Mammary epithelial cell (primary cell): ENCODE measurements at regions of chr2 and their contacts with region 1.

Region 1: DNA sequence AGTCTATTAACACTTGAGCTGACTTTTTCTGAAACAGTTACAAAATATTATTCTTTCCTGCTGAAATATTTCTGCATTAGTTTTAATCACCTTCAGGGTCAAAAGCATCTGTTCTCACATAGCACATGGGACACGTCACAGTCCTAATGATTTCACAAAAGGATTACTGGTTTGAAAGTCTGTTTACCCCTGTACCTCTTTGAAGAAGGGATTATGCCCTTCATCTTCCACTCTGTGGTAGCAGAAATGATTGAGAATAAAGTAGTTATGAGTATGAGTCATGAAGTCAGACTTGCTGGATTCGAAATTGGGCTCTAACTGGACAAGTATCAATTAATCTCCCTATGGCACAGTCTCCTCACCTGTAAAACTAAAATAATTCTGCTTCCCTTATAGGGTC is 121.2 kb downstream of the SATB2 start:
- DNase-seq: no peak
- H3K4me3 ChIP-seq: no peak overlapping the region
- H3K27ac ChIP-seq: no peak overlapping the region
- H3K4me1 ChIP-seq: no peaks in the 10 kb centered on the region
- H3K27me3 ChIP-seq: no peaks in the 10 kb centered on the region
- CTCF ChIP-seq: no peak

Region 2: GRCh38 chr2:199303728-199304177 is 32.8 kb before region 1 on chr2:
- CTCF ChIA-PET with region 1: no interaction called
- dilution Hi-C with region 1: no loop called
- in situ Hi-C with region 1: no loop called
- intact Hi-C with region 1: loop called (anchors 1 kb)
- DNase-seq: peak; percentile 90
- H3K4me3 ChIP-seq: no peak overlapping the region
- H3K27ac ChIP-seq: peak overlapping the region; percentile 5
- H3K4me1 ChIP-seq: peaks cover 13% of the 10 kb centered on the region
- H3K27me3 ChIP-seq: no peaks in the 10 kb centered on the region
- CTCF ChIP-seq: no peak

Region 3: DNA sequence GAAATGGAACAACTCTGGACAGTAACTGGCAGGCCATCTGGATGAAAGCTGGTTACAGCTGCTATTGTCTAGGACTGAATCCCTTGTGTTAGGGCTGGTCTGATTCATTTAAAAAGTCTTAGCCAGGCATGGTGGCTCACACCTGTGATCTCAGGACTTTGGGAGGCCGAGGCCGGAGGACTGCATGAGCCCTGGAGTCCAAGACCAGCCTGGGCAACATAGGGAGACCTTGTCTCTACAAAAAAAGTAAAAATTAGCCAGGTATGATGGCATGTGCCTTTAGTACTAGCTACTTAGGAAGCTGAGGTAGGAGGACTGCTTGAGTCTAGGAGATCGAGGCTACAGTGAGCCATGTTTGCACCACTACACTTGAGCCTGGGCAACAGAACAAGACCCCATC is 1764.0 kb after region 1 on chr2:
- CTCF ChIA-PET with region 1: no interaction called
- dilution Hi-C with region 1: no loop called
- in situ Hi-C with region 1: no loop called
- intact Hi-C with region 1: no loop called
- DNase-seq: no peak
- H3K4me3 ChIP-seq: no peak overlapping the region
- H3K27ac ChIP-seq: no peak overlapping the region
- H3K4me1 ChIP-seq: no peaks in the 10 kb centered on the region
- H3K27me3 ChIP-seq: no peaks in the 10 kb centered on the region
- CTCF ChIP-seq: no peak